OCI-LY7 (cell line): ENCODE measurements at regions of chr17 and their contacts with region 1.

Region 1: GRCh38 chr17:19630661-19631060 is 17.9 kb upstream of the ALDH3A2 start:
- DNase-seq: no peak
- H3K4me3 ChIP-seq: no peak overlapping the region
- H3K27ac ChIP-seq: no peak overlapping the region
- H3K4me1 ChIP-seq: no peaks in the 10 kb centered on the region
- CTCF ChIP-seq: no peak

Region 2: GRCh38 chr17:19398301-19399181 is 232.1 kb before region 1 on chr17:
- CTCF ChIA-PET with region 1: no interaction called
- POLR2A ChIA-PET with region 1: no interaction called
- intact Hi-C with region 1: no loop called
- DNase-seq: no peak
- H3K4me3 ChIP-seq: no peak overlapping the region
- H3K27ac ChIP-seq: no peak overlapping the region
- H3K4me1 ChIP-seq: peaks cover 13% of the 10 kb centered on the region
- CTCF ChIP-seq: no peak

Region 3: DNA sequence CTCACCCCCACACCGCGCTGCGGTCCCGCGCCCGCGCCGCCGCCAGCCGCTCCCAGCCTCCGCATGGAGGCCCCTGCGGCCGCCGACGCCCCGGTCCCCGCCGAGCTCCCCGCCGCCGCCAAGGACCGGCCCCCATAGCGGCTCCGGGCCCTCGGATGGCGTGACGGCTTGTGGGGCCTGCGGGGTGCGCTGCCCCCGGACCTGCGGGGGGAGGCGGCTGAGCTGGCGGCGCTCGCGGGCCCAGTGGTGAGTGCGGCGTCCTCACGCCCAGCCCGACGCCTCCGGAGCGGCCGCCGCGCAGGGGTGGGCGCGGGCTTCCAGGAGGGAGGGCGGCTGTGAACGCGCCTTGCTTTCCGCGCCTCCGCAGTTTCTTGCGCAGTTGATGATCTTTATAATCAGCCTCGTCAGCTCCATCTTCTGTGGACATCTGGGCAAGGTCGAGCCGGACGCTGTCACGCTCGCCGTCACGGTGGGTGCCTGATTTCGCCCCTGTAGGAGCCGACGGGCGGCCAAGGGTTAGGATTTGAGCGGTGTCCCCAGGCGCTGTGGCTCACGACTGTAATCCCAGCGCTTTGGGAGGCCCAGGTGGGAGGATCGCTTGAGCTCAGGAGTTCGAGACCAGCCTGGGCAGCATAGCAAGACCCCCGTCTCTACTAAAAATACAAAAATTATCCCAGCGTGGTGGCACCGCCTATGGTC is 50.6 kb before region 1 on chr17:
- CTCF ChIA-PET with region 1: no interaction called
- POLR2A ChIA-PET with region 1: no interaction called
- intact Hi-C with region 1: loop called (anchors 10 kb)
- DNase-seq: no peak
- H3K4me3 ChIP-seq: no peak overlapping the region
- H3K27ac ChIP-seq: no peak overlapping the region
- H3K4me1 ChIP-seq: no peaks in the 10 kb centered on the region
- CTCF ChIP-seq: no peak